CD4-positive, alpha-beta memory T cell (primary cell): ENCODE measurements at regions of chr11 and their contacts with region 1.

Region 1: GRCh38 chr11:108121274-108122155 is at the start of gene ACAT1:
- DNase-seq: peak; percentile 93 to 95 (median 93)
- H3K4me3 ChIP-seq: peak within 1 kb of the TSS; percentile 85 to 91
- H3K4me3 Mint-ChIP-seq: peak within 1 kb of the TSS; percentile 82 to 96 (median 93)
- H3K27ac ChIP-seq: peak within 1 kb of the TSS; percentile 71
- H3K27ac Mint-ChIP-seq: peak within 1 kb of the TSS; percentile 61 to 96 (median 89)
- H3K4me1 ChIP-seq: peaks cover 41% of the 10 kb centered on the region
- H3K4me1 Mint-ChIP-seq: peaks cover 36 to 55% (median 38%) of the 10 kb centered on the region in 4 donors
- H3K27me3 ChIP-seq: no peaks in the 10 kb centered on the region
- H3K27me3 Mint-ChIP-seq: no peaks in the 10 kb centered on the region
- total RNA-seq, gene ACAT1: 19.3 to 19.5 TPM

Region 2: GRCh38 chr11:107243929-107244328 is 877.6 kb before region 1 on chr11:
- CTCF ChIA-PET with region 1: no interaction called
- POLR2A ChIA-PET with region 1: no interaction called
- intact Hi-C with region 1: no loop called
- DNase-seq: no peak
- H3K4me3 ChIP-seq: no peak overlapping the region
- H3K4me3 Mint-ChIP-seq: no peak overlapping the region
- H3K27ac ChIP-seq: no peak overlapping the region
- H3K27ac Mint-ChIP-seq: no peak overlapping the region
- H3K4me1 ChIP-seq: no peaks in the 10 kb centered on the region
- H3K4me1 Mint-ChIP-seq: no peaks in the 10 kb centered on the region
- H3K27me3 ChIP-seq: no peaks in the 10 kb centered on the region
- H3K27me3 Mint-ChIP-seq: no peaks in the 10 kb centered on the region

Region 3: DNA sequence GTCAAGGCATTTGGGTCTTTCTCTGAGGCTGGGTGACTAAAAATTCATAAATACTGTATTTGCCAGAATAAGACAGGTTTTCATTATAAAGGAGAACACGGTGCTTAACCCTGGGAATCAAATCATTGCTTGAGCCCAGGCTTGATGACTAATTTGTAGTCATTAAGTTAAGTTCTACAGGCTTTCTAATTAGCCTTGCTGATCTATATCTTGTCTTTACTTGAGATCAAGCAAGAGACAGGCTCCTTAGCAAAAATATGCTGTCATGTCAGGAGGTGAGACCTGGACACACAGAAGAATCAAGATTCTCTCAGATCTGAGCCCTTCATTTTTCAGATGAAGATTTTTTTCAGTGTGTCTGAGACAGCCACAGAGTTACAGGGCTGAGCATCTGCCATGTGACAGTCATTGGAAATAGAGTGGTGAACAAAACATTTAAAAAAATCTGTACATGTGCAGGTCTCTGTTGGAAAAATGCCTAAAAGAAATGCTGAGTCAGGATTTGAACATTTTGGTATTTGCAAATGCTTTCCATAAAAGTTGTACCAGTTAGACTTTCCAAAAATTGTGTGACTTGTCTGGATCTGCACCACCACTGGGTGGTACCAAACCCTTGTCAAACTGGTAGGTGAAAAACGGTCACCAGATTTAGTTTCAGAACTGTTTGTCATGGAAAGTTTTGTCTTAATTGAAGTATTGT is 14.5 kb after region 1 on chr11:
- CTCF ChIA-PET with region 1: interaction called, 3 read pairs
- POLR2A ChIA-PET with region 1: interaction called, 3 read pairs
- intact Hi-C with region 1: loop called (anchors 1 kb)
- DNase-seq: peak in 2 of 5 donors; percentile 24 to 41
- H3K4me3 ChIP-seq: no peak overlapping the region
- H3K4me3 Mint-ChIP-seq: no peak overlapping the region
- H3K27ac ChIP-seq: no peak overlapping the region
- H3K27ac Mint-ChIP-seq: peak overlapping the region in 4 of 7 donors; percentile 40 to 75 (median 46)
- H3K4me1 ChIP-seq: peaks cover 3% of the 10 kb centered on the region
- H3K4me1 Mint-ChIP-seq: peaks cover 0 to 25% (median 8%) of the 10 kb centered on the region in 4 donors
- H3K27me3 ChIP-seq: no peaks in the 10 kb centered on the region
- H3K27me3 Mint-ChIP-seq: no peaks in the 10 kb centered on the region

Region 4: GRCh38 chr11:108467091-108467823 is 345.7 kb after region 1 on chr11 and contains the start of gene C11orf65:
- CTCF ChIA-PET with region 1: no interaction called
- POLR2A ChIA-PET with region 1: no interaction called
- intact Hi-C with region 1: loop called (anchors 5 kb)
- DNase-seq: peak; percentile 96 to 97 (median 97)
- H3K4me3 ChIP-seq: peak within 1 kb of the TSS; percentile 40 to 94
- H3K4me3 Mint-ChIP-seq: peak within 1 kb of the TSS; percentile 96 to 100 (median 97)
- H3K27ac ChIP-seq: peak within 1 kb of the TSS; percentile 95
- H3K27ac Mint-ChIP-seq: peak within 1 kb of the TSS; percentile 97 to 100 (median 100)
- H3K4me1 ChIP-seq: peaks cover 8% of the 10 kb centered on the region
- H3K4me1 Mint-ChIP-seq: peaks cover 5 to 16% (median 9%) of the 10 kb centered on the region in 4 donors
- H3K27me3 ChIP-seq: no peaks in the 10 kb centered on the region
- H3K27me3 Mint-ChIP-seq: no peaks in the 10 kb centered on the region
- total RNA-seq, gene C11orf65: 0.30 to 0.93 TPM

Region 5: GRCh38 chr11:108593214-108593922 is 471.9 kb after region 1 on chr11 and contains the start of gene EXPH5:
- CTCF ChIA-PET with region 1: no interaction called
- POLR2A ChIA-PET with region 1: no interaction called
- intact Hi-C with region 1: loop called (anchors 2 kb)
- DNase-seq: peak; percentile 82 to 89 (median 86)
- H3K4me3 ChIP-seq: peak within 1 kb of the TSS; percentile 83 to 89
- H3K4me3 Mint-ChIP-seq: peak within 1 kb of the TSS; percentile 95 to 100 (median 97)
- H3K27ac ChIP-seq: peak within 1 kb of the TSS; percentile 45
- H3K27ac Mint-ChIP-seq: peak within 1 kb of the TSS; percentile 78 to 99 (median 95)
- H3K4me1 ChIP-seq: peaks cover 9% of the 10 kb centered on the region
- H3K4me1 Mint-ChIP-seq: peaks cover 17 to 23% (median 18%) of the 10 kb centered on the region in 4 donors
- H3K27me3 ChIP-seq: peaks cover 6% of the 10 kb centered on the region
- H3K27me3 Mint-ChIP-seq: peaks cover 2 to 3% of the 10 kb centered on the region in 2 donors
- total RNA-seq, gene EXPH5: 2.6 to 4.0 TPM

Region 6: DNA sequence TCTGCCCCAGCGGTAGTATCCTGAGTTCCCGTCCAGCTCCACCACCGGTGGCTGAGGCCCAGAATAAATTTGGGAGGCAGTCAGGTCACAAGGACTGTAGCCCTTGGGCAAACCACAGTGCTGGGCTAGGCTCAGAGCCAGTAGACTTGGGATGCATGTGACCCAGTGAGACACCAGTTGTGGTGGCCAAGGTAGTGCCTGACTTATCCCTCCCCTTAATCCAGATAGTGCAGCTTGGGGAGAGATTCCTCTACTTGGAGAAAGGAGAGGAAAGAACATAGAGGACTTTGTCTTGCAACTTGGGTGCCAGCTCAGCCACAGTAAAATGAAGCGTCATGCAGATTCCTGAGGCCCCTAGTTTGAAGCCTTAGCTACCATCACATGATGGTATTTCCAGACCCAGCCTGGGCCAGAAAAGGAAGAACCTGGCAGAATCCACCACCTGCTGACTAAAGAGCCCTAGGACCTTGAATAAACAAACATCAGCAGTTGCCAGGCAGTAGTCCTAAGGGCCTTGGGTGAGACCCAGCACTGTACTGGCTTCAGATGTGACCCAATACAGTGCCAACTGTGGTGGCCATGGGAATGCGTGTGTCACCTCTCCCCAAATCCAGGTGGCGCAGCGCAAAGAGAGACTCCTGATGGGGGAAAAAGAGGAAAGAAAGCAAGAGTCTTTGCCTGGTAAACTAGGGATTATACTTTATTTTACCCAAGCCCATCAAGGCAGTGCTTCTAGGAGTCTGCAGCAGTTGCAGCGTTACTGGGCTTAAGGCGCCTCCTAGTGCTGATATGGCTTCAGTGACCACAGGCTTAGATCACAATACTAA is 526.4 kb after region 1 on chr11:
- CTCF ChIA-PET with region 1: interaction called, 21 read pairs
- POLR2A ChIA-PET with region 1: no interaction called
- intact Hi-C with region 1: loop called (anchors 1 kb)
- DNase-seq: peak; percentile 58 to 65 (median 63)
- H3K4me3 ChIP-seq: no peak overlapping the region
- H3K4me3 Mint-ChIP-seq: no peak overlapping the region
- H3K27ac ChIP-seq: no peak overlapping the region
- H3K27ac Mint-ChIP-seq: no peak overlapping the region
- H3K4me1 ChIP-seq: no peaks in the 10 kb centered on the region
- H3K4me1 Mint-ChIP-seq: no peaks in the 10 kb centered on the region
- H3K27me3 ChIP-seq: no peaks in the 10 kb centered on the region
- H3K27me3 Mint-ChIP-seq: peaks cover 1 to 2% of the 10 kb centered on the region in 2 donors

Region 7: DNA sequence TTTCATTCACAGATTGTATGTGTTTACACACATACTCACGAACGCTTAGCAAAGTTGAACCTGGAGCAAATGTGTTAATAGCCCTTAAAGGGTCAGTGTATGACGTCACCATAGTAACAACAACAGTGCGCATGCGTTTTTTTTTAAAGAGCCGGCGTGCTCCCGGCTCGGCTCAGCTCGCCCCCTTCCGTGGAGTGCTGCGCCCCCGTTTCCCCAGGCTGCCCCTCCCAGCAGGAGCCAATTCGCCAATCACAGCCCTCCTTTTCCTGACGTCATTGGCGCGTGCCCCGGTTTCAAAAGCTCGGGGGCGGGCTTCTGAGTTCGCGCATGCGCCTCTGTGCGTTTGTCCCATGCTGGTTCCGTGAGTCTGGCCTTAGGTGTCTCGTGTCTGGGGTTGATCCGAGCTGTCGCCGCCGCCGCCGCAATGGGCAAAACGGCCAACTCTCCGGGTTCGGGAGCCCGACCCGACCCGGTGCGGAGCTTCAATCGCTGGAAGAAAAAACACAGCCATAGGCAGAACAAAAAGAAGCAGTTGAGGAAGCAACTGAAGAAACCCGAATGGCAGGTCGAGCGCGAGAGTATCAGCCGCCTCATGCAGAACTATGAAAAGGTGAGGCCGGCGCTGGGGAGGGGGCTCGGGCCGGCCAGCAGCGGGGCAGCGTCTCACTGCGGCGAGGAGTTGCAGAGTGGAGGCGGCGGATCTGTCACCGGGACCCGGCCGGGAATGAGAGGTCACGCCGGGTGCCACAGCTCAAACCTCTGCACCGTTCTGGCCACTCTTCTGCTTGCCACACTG is 543.4 kb after region 1 on chr11 and contains the start of gene DDX10:
- CTCF ChIA-PET with region 1: interaction called, 6 read pairs
- POLR2A ChIA-PET with region 1: interaction called, 3 read pairs
- intact Hi-C with region 1: loop called (anchors 5 kb)
- DNase-seq: peak; percentile 97 to 99 (median 98)
- H3K4me3 ChIP-seq: peak within 1 kb of the TSS; percentile 66 to 71
- H3K4me3 Mint-ChIP-seq: peak within 1 kb of the TSS; percentile 98 to 100 (median 100)
- H3K27ac ChIP-seq: peak within 1 kb of the TSS; percentile 64
- H3K27ac Mint-ChIP-seq: peak within 1 kb of the TSS; percentile 94 to 100 (median 99)
- H3K4me1 ChIP-seq: peaks cover 32% of the 10 kb centered on the region
- H3K4me1 Mint-ChIP-seq: peaks cover 32 to 56% (median 45%) of the 10 kb centered on the region in 4 donors
- H3K27me3 ChIP-seq: no peaks in the 10 kb centered on the region
- H3K27me3 Mint-ChIP-seq: no peaks in the 10 kb centered on the region
- total RNA-seq, gene DDX10: 17.4 to 18.2 TPM